ENCODE measurements at regions of chr13 and their contacts with region 1.

Region 1: DNA sequence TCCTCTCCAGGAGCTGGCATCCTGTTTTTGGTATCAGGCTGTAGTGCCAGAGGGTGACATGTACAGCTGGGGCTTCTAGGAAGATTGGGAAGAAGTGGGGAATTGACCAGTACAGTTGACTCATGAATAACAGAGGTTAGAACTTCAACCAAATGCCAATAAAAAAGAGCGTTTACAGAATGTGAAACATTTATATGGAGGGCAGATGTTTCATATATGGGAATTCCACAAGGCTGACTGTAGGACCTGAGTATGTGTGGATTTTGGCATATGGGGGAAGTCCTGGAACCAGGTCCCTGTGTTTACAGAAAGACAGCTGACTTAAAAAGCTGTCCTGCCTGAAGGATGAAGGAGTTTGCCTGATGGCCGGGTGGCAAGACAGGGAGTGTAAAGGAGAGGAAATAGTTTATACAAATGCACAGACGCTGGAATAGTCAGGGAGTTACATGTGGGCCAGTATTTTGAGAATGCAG is 5.2 kb downstream of the CHAMP1 start:
- DNase-seq: no peak
- ATAC-seq: no peak
- H3K4me3 ChIP-seq: no peak overlapping the region
- H3K4me3 Mint-ChIP-seq: no peak overlapping the region
- H3K27ac ChIP-seq: no peak overlapping the region
- H3K27ac Mint-ChIP-seq: peak overlapping the region; percentile 68
- H3K4me1 ChIP-seq: peaks cover 13 to 17% of the 10 kb centered on the region in 2 experiments
- H3K4me1 Mint-ChIP-seq: peaks cover 45 to 48% (median 47%) of the 10 kb centered on the region in 3 donors
- H3K27me3 ChIP-seq: no peaks in the 10 kb centered on the region
- H3K27me3 Mint-ChIP-seq: no peaks in the 10 kb centered on the region

Region 2: GRCh38 chr13:114174529-114174961 is 144.9 kb before region 1 on chr13:
- CTCF ChIA-PET with region 1: no interaction called
- POLR2A ChIA-PET with region 1: interaction called in 1 of 2 experiments, 13 read pairs
- DNase-seq: no peak
- ATAC-seq: peak in 3 of 4 experiments; percentile 47 to 53 (median 52)
- H3K4me3 ChIP-seq: no peak overlapping the region
- H3K4me3 Mint-ChIP-seq: peak overlapping the region in 1 of 3 donors; percentile 25
- H3K27ac ChIP-seq: no peak overlapping the region
- H3K27ac Mint-ChIP-seq: peak overlapping the region; percentile 75 to 77
- H3K4me1 ChIP-seq: peaks cover 0 to 43% of the 10 kb centered on the region in 2 experiments
- H3K4me1 Mint-ChIP-seq: peaks cover 25 to 52% (median 36%) of the 10 kb centered on the region in 3 donors
- H3K27me3 ChIP-seq: peaks cover 0 to 4% of the 10 kb centered on the region in 2 experiments
- H3K27me3 Mint-ChIP-seq: peaks cover 0 to 4% of the 10 kb centered on the region in 2 donors

Region 3: DNA sequence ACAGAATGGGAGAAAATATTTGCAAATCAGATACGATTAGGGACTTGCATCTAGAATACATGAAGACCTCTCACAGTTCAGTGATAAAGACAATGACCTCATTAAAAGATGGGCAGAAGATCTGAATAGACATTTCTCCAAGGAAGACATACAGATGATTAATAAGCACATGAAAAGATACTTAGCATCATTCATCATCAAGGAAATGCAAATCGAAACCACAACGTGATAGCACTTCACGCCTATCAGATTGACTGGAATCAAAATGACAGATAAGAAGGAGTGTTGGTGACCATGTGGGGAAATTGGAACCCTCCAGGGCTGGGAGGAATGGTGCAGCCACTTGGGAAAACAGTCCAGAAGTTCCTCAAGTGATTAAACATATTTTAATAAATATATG is 114.6 kb before region 1 on chr13:
- CTCF ChIA-PET with region 1: no interaction called
- POLR2A ChIA-PET with region 1: no interaction called
- DNase-seq: peak in 1 of 35 experiments; percentile 27
- ATAC-seq: no peak
- H3K4me3 ChIP-seq: no peak overlapping the region
- H3K4me3 Mint-ChIP-seq: no peak overlapping the region
- H3K27ac ChIP-seq: no peak overlapping the region
- H3K27ac Mint-ChIP-seq: peak overlapping the region in 1 of 2 donors; percentile 58
- H3K4me1 ChIP-seq: peaks cover 0 to 25% of the 10 kb centered on the region in 2 experiments
- H3K4me1 Mint-ChIP-seq: peaks cover 38 to 44% (median 38%) of the 10 kb centered on the region in 3 donors
- H3K27me3 ChIP-seq: peaks cover 0 to 7% of the 10 kb centered on the region in 2 experiments
- H3K27me3 Mint-ChIP-seq: no peaks in the 10 kb centered on the region

Region 4: DNA sequence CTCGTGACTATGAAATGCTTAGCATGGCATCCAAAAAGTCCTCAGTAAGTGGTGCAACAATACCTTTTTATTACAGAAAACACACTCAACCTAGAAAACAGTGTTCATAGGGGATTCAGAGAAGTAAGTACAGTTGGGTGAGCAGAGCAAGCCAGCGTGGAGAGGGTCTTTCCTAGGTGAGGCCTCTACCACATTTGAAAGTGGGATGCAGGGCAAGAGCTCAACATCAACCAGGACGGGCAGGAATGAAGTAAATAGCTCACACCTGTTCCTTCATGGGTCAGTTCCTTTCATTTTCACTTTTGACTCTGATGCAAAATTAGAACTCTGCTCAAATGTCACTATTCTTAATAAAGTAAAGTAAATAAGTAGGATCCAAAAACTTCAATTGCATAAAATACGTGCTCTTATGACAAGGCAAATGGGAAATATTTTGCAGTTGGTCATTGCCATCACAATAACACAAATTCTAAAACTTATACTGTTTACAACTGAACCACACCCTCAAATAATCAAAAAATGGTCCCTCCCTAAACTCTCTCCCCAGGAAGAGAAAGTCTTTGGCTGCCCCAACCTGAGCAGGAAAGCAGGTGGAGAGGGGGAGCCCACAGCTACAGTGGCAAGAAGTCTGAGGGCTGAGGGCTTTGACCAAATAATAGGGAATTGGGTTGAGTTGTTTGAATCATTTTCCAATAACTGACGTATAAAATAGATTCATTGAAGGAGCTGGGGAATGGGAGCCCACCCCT is 15.0 kb after region 1 on chr13:
- CTCF ChIA-PET with region 1: interaction called in 1 of 2 experiments, 12 read pairs
- POLR2A ChIA-PET with region 1: no interaction called
- DNase-seq: peak in 1 of 35 experiments; percentile 6
- ATAC-seq: no peak
- H3K4me3 ChIP-seq: peak overlapping the region in 1 of 2 donors; percentile 15
- H3K4me3 Mint-ChIP-seq: peak overlapping the region; percentile 39 to 68 (median 60)
- H3K27ac ChIP-seq: no peak overlapping the region
- H3K27ac Mint-ChIP-seq: peak overlapping the region; percentile 66 to 71
- H3K4me1 ChIP-seq: peaks cover 0 to 13% of the 10 kb centered on the region in 2 experiments
- H3K4me1 Mint-ChIP-seq: peaks cover 11 to 26% (median 23%) of the 10 kb centered on the region in 3 donors
- H3K27me3 ChIP-seq: no peaks in the 10 kb centered on the region
- H3K27me3 Mint-ChIP-seq: no peaks in the 10 kb centered on the region

Measured in T-cell (primary cell).